Dorsolateral prefrontal cortex (tissue), 120 donors: ENCODE measurements at regions of chr7 and their contacts with region 1.

Region 1: DNA sequence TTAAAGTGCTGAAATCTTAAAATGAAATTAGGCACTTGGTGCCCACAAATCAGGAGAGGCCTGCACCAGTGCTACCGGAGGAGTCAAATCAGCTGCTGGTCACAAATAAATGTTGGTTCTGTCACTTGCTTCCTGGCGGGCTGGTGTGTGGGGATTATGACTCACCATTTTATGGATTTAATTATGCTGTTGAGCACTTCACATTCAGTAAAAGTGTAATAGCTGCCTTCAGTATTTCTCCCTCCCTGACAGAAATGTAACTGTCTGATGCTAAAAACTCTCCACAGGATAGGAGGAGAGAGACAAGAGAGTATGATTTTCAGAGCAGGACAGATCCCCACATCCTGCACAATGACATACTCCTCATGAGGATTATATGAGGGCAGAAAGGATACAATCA is 186.0 kb downstream of the JAZF1 start:
- DNase-seq: peak in 1 of 10 donors; percentile 24
- H3K4me3 ChIP-seq: no peak overlapping the region
- H3K27ac ChIP-seq: peak overlapping the region in 2 of 59 donors; percentile 4
- H3K27me3 ChIP-seq: no peaks in the 10 kb centered on the region
- CTCF ChIP-seq: no peak

Region 2: DNA sequence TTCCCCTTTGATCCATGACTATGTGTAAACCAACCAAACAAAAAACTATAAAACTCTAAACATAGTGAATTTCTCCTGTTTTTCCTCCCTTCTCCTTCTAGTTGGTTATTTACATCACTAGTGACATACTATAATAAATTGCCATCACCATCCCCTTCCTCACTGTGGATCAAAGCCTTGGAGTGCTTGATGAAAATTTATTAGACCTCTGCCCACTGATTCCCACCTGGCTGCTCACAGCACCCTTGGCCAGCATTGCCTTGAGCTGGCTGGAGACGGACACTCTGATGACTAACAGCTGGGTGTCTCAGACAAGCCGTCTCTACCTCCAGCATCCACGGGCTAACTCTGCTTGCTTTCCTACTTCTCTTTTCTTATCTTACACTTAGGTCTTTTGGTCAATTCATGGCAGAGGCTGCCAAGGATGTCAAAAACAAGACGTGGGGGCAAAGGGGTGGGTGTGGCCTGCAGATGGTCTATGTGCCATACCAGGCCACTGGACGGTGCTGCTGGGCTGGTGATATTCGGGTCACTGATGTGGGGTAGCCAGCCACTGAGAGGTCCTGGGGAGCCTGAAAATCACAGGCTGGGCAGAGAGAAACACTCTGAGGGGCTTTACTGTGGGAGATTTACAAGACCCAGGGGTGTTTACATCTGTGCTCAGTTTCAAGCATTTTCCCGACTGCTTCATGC is 46.9 kb before region 1 on chr7:
- intact Hi-C with region 1: loop called in 1 of 2 experiments (anchors 5 kb)
- DNase-seq: peak in 3 of 10 donors; percentile 37 to 65 (median 58)
- H3K4me3 ChIP-seq: peak overlapping the region in 4 of 59 donors; percentile 9 to 36 (median 13)
- H3K27ac ChIP-seq: peak overlapping the region in 24 of 59 donors; percentile 4 to 74 (median 25)
- H3K27me3 ChIP-seq: no peaks in the 10 kb centered on the region
- CTCF ChIP-seq: peak in 28 of 56 donors; percentile 10 to 56 (median 28)

Region 3: GRCh38 chr7:27972276-27972675 is 22.4 kb before region 1 on chr7:
- intact Hi-C with region 1: loop called in 1 of 2 experiments (anchors 2 kb)
- DNase-seq: no peak
- H3K4me3 ChIP-seq: no peak overlapping the region
- H3K27ac ChIP-seq: peak overlapping the region in 7 of 59 donors; percentile 2 to 49 (median 23)
- H3K27me3 ChIP-seq: no peaks in the 10 kb centered on the region
- CTCF ChIP-seq: no peak

Region 4: GRCh38 chr7:28036748-28037147 is 42.1 kb after region 1 on chr7:
- intact Hi-C with region 1: no loop called
- DNase-seq: no peak
- H3K4me3 ChIP-seq: no peak overlapping the region
- H3K27ac ChIP-seq: peak overlapping the region in 54 of 59 donors; percentile 14 to 91 (median 66)
- H3K27me3 ChIP-seq: no peaks in the 10 kb centered on the region
- CTCF ChIP-seq: no peak

Region 5: DNA sequence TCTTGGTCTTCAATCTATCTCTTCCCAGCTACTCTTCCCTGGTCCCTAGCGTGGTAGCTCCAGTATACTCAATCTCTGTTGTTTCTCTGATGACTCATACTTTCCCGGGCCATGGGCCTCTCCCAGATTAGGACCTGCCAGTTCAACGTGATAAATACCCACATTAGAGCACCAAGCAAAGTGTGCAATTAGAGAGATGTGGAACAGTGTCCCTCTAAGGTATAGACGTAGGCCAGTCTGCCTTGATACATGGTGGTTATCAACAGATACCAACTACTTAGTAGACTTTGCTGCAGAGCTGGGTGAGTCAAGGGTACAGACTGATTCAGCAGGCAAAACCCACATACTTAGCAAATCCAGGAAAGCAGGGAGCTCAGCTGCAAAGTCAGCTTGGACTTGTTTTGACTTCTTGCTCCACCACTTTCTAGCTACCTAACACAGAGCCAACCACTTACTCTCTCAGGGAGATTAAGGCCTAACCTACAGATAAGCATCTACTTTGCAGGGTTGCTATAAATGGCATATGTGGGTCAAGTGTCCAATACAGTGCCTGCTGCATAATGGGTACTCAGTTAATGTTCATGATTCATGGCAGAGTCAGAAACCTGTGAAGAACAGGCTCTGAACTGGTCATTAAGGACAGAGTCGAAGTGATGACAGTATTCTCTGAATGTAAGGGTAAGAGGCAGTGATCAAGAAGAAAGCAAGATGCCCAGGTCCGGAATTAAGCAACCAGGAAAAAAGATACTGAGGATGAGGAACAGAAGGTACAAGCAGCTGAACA is 1376.1 kb after region 1 on chr7:
- intact Hi-C with region 1: no loop called
- DNase-seq: no peak
- H3K4me3 ChIP-seq: no peak overlapping the region
- H3K27ac ChIP-seq: peak overlapping the region in 5 of 59 donors; percentile 3 to 61 (median 30)
- H3K27me3 ChIP-seq: no peaks in the 10 kb centered on the region
- CTCF ChIP-seq: no peak